ENCODE measurements at regions of chr11 and their contacts with region 1.

Region 1: DNA sequence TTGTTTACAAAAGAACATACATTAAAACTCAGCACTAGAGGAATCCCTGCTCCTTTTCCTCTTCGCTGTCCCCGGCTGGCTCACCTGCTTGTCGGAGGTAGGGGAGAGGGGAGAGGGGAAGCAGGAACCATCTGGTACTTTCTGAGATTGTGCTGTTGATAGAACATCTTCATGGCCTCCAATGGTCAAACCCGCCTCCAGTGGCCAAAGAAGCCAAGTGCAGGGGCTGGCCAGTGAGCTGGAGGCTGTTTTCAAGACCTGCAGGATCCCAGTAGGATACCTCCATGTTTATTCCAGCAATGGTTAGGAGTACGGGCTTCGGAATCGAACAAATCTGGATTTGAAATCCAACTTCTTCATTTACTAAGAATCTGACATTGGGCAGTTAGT is 92.6 kb downstream of the PKNOX2 start:
- DNase-seq: no peak
- ATAC-seq: no peak
- H3K4me3 ChIP-seq: no peak overlapping the region
- H3K27ac ChIP-seq: peak overlapping the region in 1 of 12 donors; percentile 13
- H3K4me1 ChIP-seq: peaks cover 0 to 57% (median 5%) of the 10 kb centered on the region in 12 donors
- H3K27me3 ChIP-seq: peaks cover 0 to 5% (median 0%) of the 10 kb centered on the region in 9 donors
- CTCF ChIP-seq: peak in 2 of 12 donors; percentile 16 to 19
- POLR2A ChIP-seq: no peak

Region 2: DNA sequence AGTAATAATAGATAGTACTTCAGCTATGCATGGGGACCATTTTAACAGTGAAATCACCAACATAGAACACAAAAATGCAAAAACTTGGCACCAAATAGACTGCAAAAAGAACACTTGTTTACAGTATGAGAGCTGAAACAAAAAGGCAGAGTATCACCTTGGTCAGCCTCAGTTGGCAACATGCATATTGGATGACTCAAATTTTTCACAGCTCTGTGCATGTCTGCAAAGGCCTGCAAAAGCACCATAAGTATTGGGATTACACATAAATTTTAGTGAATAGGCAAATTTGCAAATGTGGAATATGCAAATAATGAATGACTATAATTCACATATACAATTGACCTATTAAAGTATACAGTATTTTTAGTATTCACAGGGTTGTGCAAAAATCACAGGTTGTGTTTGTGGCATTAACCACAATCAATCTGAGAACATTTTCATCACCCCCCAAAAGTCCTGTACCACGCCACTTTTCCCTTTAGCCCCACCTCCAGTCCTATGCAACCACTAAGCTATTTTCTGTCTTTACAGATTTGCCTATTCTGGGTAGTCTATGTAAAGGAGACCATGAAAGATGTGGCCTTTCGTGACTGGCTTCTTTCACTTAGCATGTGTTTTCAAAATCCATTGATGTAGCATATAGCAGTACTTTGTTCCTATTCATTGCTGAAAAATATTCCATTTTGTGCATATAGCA is 256.0 kb before region 1 on chr11:
- intact Hi-C with region 1: no loop called
- DNase-seq: no peak
- ATAC-seq: no peak
- H3K4me3 ChIP-seq: no peak overlapping the region
- H3K27ac ChIP-seq: no peak overlapping the region
- H3K4me1 ChIP-seq: no peaks in the 10 kb centered on the region
- H3K27me3 ChIP-seq: no peaks in the 10 kb centered on the region
- CTCF ChIP-seq: no peak
- POLR2A ChIP-seq: no peak

Region 3: GRCh38 chr11:125164422-125165110 is 92.6 kb before region 1 on chr11 and contains the start of gene PKNOX2:
- intact Hi-C with region 1: loop called in 1 of 10 experiments (anchors 10 kb)
- DNase-seq: peak; percentile 78 to 91 (median 84)
- ATAC-seq: peak; percentile 23 to 85 (median 82)
- H3K4me3 ChIP-seq: peak within 1 kb of the TSS; percentile 54 to 86 (median 68)
- H3K27ac ChIP-seq: peak within 1 kb of the TSS; percentile 35 to 86 (median 80)
- H3K4me1 ChIP-seq: peaks cover 0 to 47% (median 24%) of the 10 kb centered on the region in 12 donors
- H3K27me3 ChIP-seq: peaks cover 0 to 48% (median 2%) of the 10 kb centered on the region in 9 donors
- CTCF ChIP-seq: peak; percentile 37 to 84 (median 62)
- POLR2A ChIP-seq: peak in 1 of 2 donors; percentile 38
- total RNA-seq, gene PKNOX2: 3.1 to 9.4 (median 5.0) TPM

Region 4: DNA sequence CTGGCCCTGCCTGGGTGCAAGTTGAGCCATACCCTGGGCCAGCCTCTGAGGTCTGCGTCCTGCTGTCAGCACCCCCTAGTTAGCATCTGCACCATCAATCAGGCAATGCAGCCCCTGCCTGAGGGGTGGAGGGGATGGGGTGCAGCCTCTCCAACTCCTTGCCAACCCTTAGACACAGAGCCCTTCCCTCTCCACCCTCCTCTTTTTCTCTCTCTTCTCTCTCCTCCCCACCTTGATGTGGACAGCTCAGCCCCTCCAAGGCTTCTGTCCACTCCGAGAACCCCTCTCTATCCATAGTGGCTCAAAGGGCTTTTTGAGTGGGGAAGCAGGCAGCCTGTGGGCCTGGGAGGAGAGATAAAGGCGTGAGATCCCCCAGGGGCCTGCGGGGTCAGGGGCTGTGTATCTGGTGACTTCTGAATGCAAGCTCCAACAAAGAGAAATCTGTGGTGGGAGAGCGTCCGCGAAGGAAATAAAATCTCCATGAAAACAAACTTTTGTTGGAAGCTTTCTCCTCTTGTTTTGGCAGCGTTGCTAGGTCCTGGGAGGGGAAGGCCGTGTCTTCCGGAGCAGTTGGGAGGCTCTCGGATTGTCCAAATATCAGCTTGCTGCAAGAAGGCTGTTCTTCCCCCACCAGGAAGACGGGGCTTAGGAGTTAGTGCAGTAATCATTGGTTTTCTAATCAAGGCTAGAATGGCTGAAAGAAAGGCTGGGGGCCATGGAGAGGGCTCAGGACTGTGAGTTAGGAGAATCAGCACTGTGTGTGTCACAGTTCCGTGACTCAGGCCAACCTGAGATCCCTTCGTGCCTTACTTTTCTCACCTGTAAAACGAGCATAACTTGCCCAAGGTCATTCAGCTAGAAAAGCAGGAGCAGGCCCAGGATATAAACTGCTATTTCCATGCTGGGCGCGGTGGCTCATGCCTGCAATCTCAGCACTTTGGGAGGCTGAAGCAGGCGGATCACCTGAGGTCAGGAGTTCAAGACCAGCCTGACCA is 42.3 kb before region 1 on chr11:
- intact Hi-C with region 1: loop called in 1 of 10 experiments (anchors 5 kb)
- DNase-seq: peak in 3 of 5 donors; percentile 61 to 70 (median 62)
- ATAC-seq: peak; percentile 61 to 77 (median 74)
- H3K4me3 ChIP-seq: peak overlapping the region in 3 of 12 donors; percentile 1 to 25 (median 14)
- H3K27ac ChIP-seq: peak overlapping the region in 10 of 12 donors; percentile 10 to 71 (median 46)
- H3K4me1 ChIP-seq: peaks cover 0 to 45% (median 23%) of the 10 kb centered on the region in 12 donors
- H3K27me3 ChIP-seq: no peaks in the 10 kb centered on the region
- CTCF ChIP-seq: no peak
- POLR2A ChIP-seq: no peak

Region 5: GRCh38 chr11:125239585-125240560 is 17.3 kb before region 1 on chr11:
- intact Hi-C with region 1: no loop called
- DNase-seq: no peak
- ATAC-seq: no peak
- H3K4me3 ChIP-seq: no peak overlapping the region
- H3K27ac ChIP-seq: no peak overlapping the region
- H3K4me1 ChIP-seq: peaks cover 0 to 3% (median 0%) of the 10 kb centered on the region in 12 donors
- H3K27me3 ChIP-seq: no peaks in the 10 kb centered on the region
- CTCF ChIP-seq: no peak
- POLR2A ChIP-seq: no peak

Region 6: GRCh38 chr11:125338886-125339811 is 82.0 kb after region 1 on chr11:
- intact Hi-C with region 1: loop called in 3 of 10 experiments (anchors 2 to 10 kb)
- DNase-seq: peak in 4 of 5 donors; percentile 57 to 64 (median 60)
- ATAC-seq: peak; percentile 71 to 86 (median 84)
- H3K4me3 ChIP-seq: no peak overlapping the region
- H3K27ac ChIP-seq: peak overlapping the region; percentile 37 to 85 (median 72)
- H3K4me1 ChIP-seq: peaks cover 0 to 24% (median 2%) of the 10 kb centered on the region in 12 donors
- H3K27me3 ChIP-seq: no peaks in the 10 kb centered on the region
- CTCF ChIP-seq: no peak
- POLR2A ChIP-seq: no peak

Measured in heart left ventricle (tissue), 16 donors.